ENCODE measurements at regions of chr20 and their contacts with region 1.

Region 1: GRCh38 chr20:3051385-3052019 is 5.7 kb downstream of the MRPS26 start:
- DNase-seq: no peak
- H3K4me3 ChIP-seq: no peak overlapping the region
- CTCF ChIP-seq: no peak

Region 2: DNA sequence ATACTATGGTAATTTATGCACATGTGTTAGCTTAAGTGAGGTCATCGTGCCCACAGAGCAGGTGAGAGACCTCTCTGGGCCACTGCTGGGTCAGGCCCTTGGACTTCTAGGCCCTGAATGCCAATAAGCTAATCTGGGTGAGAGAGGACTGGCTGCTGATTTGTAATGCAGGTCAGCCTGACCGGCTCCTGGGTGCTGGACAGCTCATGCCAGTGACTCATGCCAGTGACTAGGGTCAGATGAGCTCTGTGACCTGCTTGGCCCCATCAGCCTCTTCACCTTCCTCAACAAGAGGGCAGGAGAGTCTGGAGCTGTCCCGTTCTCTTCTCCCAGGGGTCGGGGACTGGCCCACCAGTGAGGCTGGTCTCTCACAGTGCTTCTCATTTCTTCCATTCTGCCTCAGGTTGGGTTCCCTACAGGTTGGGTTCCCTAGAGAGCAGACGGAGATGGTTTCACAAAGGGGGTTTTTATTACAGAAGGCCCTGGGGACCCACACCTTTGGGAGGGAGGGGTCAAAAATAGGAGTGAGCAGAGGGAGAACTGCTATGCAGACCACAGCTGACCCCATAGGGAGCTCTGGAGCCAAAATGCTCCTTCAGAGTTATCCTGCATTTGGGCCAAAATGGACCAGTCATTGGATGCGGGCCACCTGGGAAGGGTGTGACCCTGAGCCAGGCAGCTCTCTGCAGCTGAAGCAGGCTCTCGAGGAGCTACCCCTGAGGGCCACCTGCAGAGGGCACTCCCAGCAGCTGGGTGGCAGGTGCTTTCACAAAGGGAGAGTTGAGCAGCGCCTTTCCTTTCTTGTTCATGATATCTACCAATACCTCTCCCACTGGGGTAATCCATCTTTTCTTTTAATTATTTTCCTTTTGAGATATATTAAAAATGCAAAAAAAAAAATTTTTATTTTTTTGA is 17.7 kb after region 1 on chr20:
- CTCF ChIA-PET with region 1: interaction called, 86 read pairs
- POLR2A ChIA-PET with region 1: no interaction called
- DNase-seq: no peak
- H3K4me3 ChIP-seq: no peak overlapping the region
- CTCF ChIP-seq: no peak

Region 3: DNA sequence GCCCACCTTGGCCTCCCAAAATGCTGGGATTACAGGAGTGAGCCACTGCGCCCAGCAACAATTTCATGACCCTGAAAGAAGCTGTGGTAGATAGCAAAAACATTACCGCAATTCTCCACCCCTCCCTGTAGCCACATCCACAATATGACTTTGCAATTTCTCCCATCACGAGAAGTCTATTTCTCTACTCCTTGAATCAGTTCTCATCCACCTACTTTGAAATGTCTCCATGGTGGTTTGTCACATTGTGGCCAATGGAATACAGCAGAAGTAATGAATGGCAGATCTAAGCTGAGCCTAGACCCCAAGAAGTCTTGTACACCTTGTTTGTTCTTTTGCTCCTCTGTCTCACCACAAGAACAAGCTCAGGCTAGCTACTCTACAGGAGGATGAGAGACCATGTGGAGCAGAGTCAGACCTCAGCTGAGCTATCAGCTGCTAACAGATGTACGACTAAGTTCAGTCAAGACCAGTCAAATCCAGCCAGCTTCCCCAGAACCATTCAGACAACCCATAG is 26.2 kb after region 1 on chr20:
- CTCF ChIA-PET with region 1: interaction called, 86 read pairs
- POLR2A ChIA-PET with region 1: no interaction called
- DNase-seq: no peak
- H3K4me3 ChIP-seq: no peak overlapping the region
- CTCF ChIP-seq: no peak

Region 4: GRCh38 chr20:3084986-3085360 is 33.5 kb after region 1 on chr20:
- CTCF ChIA-PET with region 1: interaction called, 17 read pairs
- POLR2A ChIA-PET with region 1: no interaction called
- DNase-seq: no peak
- H3K4me3 ChIP-seq: no peak overlapping the region
- CTCF ChIP-seq: no peak

Region 5: DNA sequence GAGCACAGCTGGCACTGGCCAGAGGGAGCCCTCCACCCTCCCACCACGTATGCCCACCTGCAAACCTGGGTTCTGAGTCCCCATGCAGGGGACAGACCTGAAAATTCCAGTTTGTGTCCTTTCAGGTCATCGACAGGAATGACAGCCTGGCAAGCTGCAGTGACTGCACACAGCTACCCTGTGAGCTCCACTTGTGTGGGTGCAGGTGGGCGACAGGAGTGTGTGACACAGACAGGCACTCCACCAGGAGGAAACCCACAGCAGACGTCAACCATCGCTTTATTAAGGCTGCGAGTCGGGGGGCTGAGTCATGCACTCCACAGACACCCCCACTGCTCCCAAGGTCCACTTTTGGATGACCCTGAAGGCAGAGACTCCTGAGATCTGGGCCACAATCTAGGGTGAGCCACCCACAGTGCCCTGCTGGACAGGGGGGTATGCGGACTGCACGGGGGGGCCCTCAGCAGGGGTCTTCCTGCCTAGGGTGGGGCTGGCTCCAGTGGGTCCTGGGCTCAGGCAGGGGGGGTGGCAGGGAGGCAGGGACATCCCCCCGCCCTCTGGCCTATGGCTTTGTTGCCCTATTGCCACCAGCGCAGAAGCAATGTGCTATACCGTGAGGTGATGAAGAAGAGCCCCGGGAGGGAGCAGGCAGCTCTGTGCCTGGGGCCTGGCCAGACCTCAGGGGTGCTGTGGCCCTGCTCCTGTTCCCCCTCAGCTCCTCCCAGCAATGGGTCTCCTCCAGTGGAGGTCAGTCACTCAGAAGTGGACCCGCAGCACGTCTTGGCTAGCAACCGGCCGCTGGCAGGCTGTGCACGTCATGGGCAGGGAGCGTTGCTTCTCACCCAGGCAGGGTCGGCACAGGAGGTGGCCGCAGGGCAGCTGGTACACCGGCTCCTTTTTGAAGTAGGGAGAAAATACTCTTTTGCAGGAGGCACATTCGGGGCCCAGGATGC is 58.1 kb after region 1 on chr20:
- CTCF ChIA-PET with region 1: interaction called, 111 read pairs
- POLR2A ChIA-PET with region 1: interaction called, 5 read pairs
- DNase-seq: no peak
- H3K4me3 ChIP-seq: no peak overlapping the region
- CTCF ChIP-seq: no peak

Region 6: DNA sequence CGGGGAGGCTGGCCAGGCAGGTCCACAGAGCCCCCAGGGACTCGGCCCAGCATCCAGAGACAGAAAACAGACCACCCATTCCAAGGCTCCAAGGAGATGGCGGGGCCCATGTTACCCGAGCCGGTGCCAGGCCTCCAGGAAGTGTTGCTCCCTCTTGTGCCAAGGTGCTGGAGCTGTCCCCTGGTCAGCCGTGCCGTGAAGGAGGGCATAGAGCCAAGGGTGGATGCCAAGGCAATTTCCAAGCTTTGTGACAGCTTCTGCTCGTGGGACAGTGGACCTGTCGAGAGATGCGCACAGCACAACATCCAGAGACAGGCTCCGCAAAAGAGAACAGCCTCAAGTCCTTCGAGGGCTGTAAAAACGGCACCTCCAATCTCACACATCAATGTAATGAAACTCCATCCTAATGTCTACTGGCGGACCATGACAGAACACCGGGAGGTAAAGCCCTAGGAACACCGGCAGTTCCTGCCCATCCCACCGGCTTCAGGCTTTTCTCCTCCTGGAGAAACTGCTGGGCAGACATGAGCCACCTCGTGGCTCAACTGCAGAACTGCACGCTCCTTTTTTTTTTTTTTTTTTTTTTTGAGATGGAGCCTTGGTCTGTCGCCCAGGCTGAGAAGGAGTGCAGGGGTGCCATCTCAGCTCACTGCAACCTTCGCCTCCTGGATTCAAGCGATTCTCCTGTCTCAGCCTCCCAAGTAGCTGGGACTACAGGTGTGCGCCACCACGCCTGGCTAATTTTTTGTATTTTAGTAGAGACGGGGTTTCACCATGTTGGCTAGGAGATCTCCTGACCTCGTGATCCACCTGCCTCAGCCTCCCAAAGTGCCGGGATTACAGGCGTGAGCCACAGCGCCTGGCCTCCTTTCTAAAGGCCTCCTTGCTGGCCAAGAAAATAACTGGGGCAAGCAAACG is 63.9 kb after region 1 on chr20:
- CTCF ChIA-PET with region 1: interaction called, 111 read pairs
- POLR2A ChIA-PET with region 1: interaction called, 5 read pairs
- DNase-seq: no peak
- H3K4me3 ChIP-seq: no peak overlapping the region
- CTCF ChIP-seq: peak; percentile 68

Region 7: DNA sequence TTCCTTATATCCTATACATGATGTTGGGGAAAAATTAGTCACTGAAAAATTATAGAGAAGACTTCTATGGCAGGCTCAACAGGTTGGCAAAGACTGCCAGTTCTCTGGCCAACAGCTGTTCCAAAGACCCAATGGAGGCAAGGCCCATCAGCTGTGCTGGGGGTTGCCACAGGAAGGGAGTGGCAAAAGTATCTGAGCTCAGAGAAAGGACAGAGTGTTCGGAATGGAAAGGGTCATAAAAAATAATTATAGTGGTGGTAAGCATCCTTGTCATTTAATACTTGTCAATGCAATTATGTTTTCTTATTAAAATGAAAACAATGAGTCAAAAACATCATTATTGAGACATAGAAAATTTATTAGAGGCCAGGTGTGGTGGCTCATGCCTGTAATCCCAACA is 72.0 kb after region 1 on chr20:
- CTCF ChIA-PET with region 1: interaction called, 111 read pairs
- POLR2A ChIA-PET with region 1: interaction called, 5 read pairs
- DNase-seq: no peak
- H3K4me3 ChIP-seq: no peak overlapping the region
- CTCF ChIP-seq: no peak

Region 8: GRCh38 chr20:3358676-3359340 is 307.3 kb after region 1 on chr20:
- CTCF ChIA-PET with region 1: no interaction called
- POLR2A ChIA-PET with region 1: no interaction called
- DNase-seq: no peak
- H3K4me3 ChIP-seq: no peak overlapping the region
- CTCF ChIP-seq: no peak